Heart left ventricle (tissue), 16 donors: ENCODE measurements at regions of chr11 and their contacts with region 1.

Region 1: GRCh38 chr11:14907411-14908213 is 15.6 kb upstream of the CYP2R1 start:
- DNase-seq: peak; percentile 54 to 89 (median 73)
- ATAC-seq: peak; percentile 54 to 77 (median 72)
- H3K4me3 ChIP-seq: no peak overlapping the region
- H3K27ac ChIP-seq: no peak overlapping the region
- H3K4me1 ChIP-seq: peaks cover 0 to 24% (median 8%) of the 10 kb centered on the region in 12 donors
- H3K27me3 ChIP-seq: no peaks in the 10 kb centered on the region
- CTCF ChIP-seq: peak; percentile 48 to 87 (median 70)
- POLR2A ChIP-seq: no peak

Region 2: DNA sequence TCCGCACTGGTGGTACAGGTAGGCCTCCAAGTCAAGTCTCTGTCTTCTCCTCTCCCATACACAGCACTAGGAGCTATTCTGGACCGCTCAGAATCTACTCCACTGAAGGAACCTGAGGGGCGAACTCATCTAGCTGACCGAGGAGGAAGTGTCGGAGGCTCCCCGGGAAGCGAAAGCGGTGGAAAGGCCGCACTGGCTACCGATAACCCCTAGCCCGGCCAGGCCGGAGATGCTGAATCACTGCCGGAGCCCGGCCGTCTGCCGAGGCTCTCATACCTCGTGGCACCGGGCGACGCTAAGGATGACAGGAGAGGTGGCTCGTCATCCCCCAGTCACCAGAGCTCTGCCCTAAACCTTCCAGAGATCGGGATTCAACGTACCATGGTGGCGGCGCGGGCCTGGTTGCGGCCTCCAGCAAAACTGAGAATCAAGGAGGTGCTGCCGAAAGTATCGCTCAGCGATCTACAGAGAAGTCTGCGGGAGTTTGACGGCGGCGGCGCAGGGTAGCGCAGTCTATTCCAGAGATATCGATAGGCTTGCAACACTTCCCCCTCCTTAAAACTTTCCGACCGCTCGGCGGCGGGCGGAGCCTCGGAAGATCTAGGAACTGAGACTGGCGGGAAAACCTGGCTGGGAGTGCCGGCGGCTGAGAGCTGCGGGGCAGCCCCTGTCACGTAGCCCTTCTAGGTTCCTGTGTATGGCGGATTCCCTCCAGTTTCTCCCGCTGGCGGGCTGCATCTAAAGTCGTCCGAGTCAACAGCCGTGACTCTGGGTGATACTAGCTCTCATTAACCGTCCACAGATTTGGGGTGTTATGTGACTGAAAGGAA is 387.5 kb before region 1 on chr11 and contains the start of gene PSMA1:
- intact Hi-C with region 1: loop called in 1 of 10 experiments (anchors 5 kb)
- DNase-seq: peak; percentile 94 to 96 (median 95)
- ATAC-seq: peak; percentile 98
- H3K4me3 ChIP-seq: peak within 1 kb of the TSS; percentile 55 to 99 (median 81)
- H3K27ac ChIP-seq: peak within 1 kb of the TSS; percentile 69 to 96 (median 88)
- H3K4me1 ChIP-seq: peaks cover 5 to 24% (median 15%) of the 10 kb centered on the region in 12 donors
- H3K27me3 ChIP-seq: no peaks in the 10 kb centered on the region
- CTCF ChIP-seq: peak in 11 of 12 donors; percentile 16 to 59 (median 43)
- POLR2A ChIP-seq: peak in 1 of 2 donors; percentile 77
- total RNA-seq, gene PSMA1: 95.5 to 136 (median 129) TPM

Region 3: DNA sequence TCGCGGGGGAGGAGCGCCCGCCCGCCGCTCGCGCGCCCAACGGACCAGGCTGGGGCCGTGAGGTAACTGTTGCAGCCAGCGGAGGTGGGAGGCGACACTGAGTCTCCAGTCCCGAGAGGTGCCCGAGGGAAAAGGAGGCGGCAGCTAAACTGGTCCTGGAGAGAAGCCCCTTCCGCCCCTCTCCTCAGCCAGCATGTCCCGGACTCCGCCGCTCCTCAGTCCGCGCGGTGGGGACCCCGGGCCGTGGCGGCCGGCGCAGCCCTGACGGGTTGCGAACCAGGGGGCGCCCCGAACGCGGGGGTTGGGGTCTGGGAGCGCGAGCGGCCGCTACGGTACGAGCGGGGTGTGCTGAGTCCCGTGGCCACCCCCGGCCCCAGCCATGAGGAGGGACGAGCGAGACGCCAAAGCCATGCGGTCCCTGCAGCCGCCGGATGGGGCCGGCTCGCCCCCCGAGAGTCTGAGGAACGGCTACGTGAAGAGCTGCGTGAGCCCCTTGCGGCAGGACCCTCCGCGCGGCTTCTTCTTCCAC is 263.9 kb before region 1 on chr11 and contains the start of gene PDE3B:
- intact Hi-C with region 1: loop called in 3 of 10 experiments (anchors 5 to 10 kb)
- DNase-seq: peak; percentile 82 to 91 (median 87)
- ATAC-seq: peak; percentile 92 to 96 (median 95)
- H3K4me3 ChIP-seq: peak within 1 kb of the TSS; percentile 77 to 91 (median 85)
- H3K27ac ChIP-seq: peak within 1 kb of the TSS; percentile 63 to 94 (median 84)
- H3K4me1 ChIP-seq: peaks cover 0 to 34% (median 1%) of the 10 kb centered on the region in 12 donors
- H3K27me3 ChIP-seq: no peaks in the 10 kb centered on the region
- CTCF ChIP-seq: peak in 1 of 12 donors; percentile 6
- POLR2A ChIP-seq: peak; percentile 32 to 48
- total RNA-seq, gene PDE3B: 7.5 to 17.0 (median 10.4) TPM

Region 4: GRCh38 chr11:14861680-14862079 is 45.9 kb before region 1 on chr11:
- intact Hi-C with region 1: loop called in 1 of 10 experiments (anchors 2 kb)
- DNase-seq: no peak
- ATAC-seq: no peak
- H3K4me3 ChIP-seq: no peak overlapping the region
- H3K27ac ChIP-seq: no peak overlapping the region
- H3K4me1 ChIP-seq: no peaks in the 10 kb centered on the region
- H3K27me3 ChIP-seq: no peaks in the 10 kb centered on the region
- CTCF ChIP-seq: no peak
- POLR2A ChIP-seq: no peak

Region 5: GRCh38 chr11:15208378-15209222 is 301.0 kb after region 1 on chr11:
- intact Hi-C with region 1: loop called in 4 of 10 experiments (anchors 5 kb)
- DNase-seq: peak; percentile 56 to 85 (median 67)
- ATAC-seq: peak; percentile 78 to 92 (median 89)
- H3K4me3 ChIP-seq: no peak overlapping the region
- H3K27ac ChIP-seq: no peak overlapping the region
- H3K4me1 ChIP-seq: no peaks in the 10 kb centered on the region
- H3K27me3 ChIP-seq: no peaks in the 10 kb centered on the region
- CTCF ChIP-seq: peak; percentile 72 to 92 (median 84)
- POLR2A ChIP-seq: no peak